ENCODE measurements at regions of chr11 and their contacts with region 1.

Region 1: DNA sequence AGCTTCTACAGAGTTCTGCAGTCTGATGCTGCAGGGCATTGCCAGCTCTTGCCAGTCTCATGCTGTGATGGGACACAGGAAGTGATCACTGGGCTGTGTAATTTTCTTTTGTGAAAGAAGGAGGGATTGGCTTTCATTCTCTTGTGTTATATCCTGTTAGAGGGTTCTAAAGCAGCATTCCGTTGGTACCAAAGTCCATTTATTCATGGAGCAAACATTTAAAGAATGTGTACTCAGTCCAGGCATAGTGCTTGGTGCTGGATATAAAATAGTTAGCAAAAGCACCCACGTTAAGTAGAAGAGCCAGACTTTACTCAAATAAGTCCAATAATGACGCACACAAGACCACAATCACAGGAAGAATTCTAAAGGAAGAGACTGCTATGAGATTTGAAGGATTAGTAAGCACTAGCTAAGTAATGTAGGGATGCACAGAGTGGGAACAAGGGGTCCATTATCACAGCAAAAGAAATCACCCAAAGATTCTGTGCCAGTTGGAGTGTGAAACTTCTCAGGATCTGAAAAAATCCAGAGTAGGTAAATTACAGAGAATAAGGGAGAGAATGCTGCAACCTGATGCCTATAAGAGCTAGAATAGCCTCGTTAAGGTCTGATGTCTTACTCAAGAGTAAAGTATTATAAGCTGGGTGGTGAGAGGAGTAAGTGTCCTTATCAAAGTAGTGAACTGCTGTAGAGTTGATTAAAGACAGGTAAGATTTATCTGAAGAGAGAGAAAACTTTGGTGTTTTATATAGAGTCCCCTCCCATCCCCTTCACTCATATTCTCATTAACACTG is 728.3 kb downstream of the METTL15 start:
- DNase-seq: no peak
- H3K4me3 ChIP-seq: no peak overlapping the region
- H3K27ac ChIP-seq: no peak overlapping the region
- H3K4me1 ChIP-seq: no peaks in the 10 kb centered on the region
- CTCF ChIP-seq: no peak

Region 2: DNA sequence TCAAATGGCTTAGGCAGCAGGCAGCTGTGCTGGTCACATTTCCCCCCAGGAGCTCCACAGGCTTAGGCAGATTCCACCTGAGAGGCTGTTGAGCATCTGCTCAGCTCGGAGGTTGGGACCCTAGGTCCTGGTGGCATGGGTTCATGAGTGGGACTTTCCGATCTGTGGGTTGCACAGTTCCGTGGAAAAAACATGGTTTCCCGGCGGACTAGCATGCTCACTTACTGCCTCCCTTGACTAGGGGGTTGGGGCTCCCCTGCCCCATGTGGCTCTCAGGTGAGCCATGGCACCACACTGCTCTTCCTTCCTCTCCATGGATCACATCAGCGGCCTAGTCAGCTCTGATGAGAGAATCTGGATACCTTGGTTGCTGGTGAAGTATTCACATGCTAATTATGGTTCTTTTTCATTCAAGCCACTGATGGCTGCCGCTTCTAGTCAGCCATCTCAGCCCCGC is 43.2 kb before region 1 on chr11:
- CTCF ChIA-PET with region 1: no interaction called
- POLR2A ChIA-PET with region 1: no interaction called
- intact Hi-C with region 1: loop called (anchors 10 kb)
- DNase-seq: no peak
- H3K4me3 ChIP-seq: no peak overlapping the region
- H3K27ac ChIP-seq: no peak overlapping the region
- H3K4me1 ChIP-seq: no peaks in the 10 kb centered on the region
- CTCF ChIP-seq: no peak